Activated T-helper 1 cell treated with anti-CD3 and anti-CD28 coated beads, Interleukin-12 subunit alpha, Interleukin-12 subunit beta, Interleukin-2, Interleukin-4 antibody, amounts not matched to agents 30 ng/mL and 10 ng/mL and 1 ng/mL, durations not matched to agents 14 hours and 24 hours and 36 hours (primary cell): ENCODE measurements at regions of chr4 and their contacts with region 1.

Region 1: DNA sequence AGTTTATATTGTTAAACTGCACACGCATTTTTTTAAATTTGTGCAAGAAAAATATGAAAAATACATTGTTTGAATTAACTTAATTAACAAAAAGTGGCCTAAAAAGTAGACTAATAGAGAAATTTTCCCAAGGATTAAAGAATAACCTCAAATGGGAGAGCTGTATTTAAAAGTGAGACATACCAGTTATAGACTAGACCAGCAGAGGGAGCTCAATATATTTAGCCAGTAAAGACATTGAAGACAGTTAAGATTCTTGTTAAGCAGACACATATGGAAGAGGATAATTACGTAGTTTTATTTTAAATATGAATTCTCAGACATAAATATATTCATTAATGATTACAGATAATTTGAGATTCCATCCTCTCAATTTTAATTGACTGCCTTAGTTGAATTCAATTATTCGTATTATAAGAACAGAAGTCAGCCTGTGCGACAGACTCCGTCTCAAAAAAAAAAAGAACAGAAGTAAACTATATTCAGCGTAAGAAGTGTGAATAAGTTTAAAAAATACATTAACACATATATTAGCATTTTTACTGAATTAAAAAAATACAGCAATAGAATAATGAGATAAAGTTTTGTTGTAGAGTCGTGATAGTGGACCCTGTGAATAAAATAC is 64.8 kb downstream of the GLRA3 start:
- DNase-seq: no peak
- H3K4me3 Mint-ChIP-seq: no peak overlapping the region
- H3K27ac Mint-ChIP-seq: no peak overlapping the region
- H3K4me1 Mint-ChIP-seq: no peaks in the 10 kb centered on the region
- H3K27me3 Mint-ChIP-seq: no peaks in the 10 kb centered on the region

Region 2: GRCh38 chr4:174813292-174813691 is 49.1 kb after region 1 on chr4:
- intact Hi-C with region 1: no loop called
- DNase-seq: no peak
- H3K4me3 Mint-ChIP-seq: no peak overlapping the region
- H3K27ac Mint-ChIP-seq: no peak overlapping the region
- H3K4me1 Mint-ChIP-seq: no peaks in the 10 kb centered on the region
- H3K27me3 Mint-ChIP-seq: no peaks in the 10 kb centered on the region

Region 3: DNA sequence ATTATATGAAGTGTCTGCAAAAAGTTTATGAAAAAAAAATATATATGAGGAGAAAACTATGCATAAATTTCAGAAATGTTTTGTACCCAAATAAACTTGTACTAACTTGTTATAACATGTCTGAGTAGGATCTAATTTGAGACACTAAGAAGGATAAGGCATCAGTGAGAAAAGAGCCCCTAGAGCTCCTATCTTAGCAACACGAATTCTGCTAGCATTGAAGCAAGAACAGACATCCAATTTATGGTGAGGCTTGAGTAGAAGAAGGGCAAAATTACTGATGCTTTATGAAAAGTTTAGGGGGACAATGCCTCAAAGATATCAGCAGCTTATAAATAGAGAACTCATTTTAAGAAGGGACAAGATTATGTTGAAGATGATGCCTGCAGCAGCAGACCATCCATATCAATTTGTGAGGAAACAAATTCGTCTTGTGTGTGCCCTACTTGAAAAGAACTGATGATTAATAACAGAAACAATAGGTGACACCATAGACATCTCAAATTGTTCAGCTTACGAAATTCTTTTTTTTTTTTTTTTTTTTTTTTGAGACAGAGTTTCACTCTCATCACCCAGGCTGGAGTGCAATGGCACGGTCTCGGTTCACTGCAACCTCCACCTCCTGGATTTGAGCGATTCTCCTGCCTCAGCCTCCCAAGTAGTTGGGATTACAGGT is 118.2 kb after region 1 on chr4:
- intact Hi-C with region 1: no loop called
- DNase-seq: no peak
- H3K4me3 Mint-ChIP-seq: no peak overlapping the region
- H3K27ac Mint-ChIP-seq: no peak overlapping the region
- H3K4me1 Mint-ChIP-seq: no peaks in the 10 kb centered on the region
- H3K27me3 Mint-ChIP-seq: no peaks in the 10 kb centered on the region

Region 4: DNA sequence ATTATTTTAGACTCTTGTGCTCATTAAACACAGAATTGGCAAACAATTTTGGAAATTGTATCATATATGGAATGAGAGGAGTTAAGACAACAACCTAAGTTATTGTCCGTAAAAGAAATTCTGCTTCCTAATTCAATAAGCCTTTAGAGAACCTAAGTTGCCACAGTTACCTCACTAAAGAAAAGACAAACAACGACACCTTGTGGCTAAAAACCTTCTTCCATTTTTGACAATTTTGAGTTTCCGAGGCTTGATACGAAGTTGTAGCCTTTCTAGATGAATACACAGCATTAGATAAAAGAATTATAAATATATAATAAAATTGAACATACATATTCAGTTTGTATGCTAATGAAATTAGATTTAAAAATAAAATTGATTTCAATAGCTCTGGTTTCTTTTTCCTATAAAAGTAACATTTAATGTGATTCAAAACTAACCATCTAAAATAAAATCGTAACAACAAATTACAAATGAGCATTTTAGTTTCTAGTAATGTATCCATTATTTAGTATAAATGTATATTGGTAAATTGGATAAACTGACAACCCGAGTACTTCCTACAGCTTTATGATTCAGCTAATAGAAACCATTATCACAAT is 772.7 kb after region 1 on chr4:
- intact Hi-C with region 1: loop called (anchors 10 kb)
- DNase-seq: no peak
- H3K4me3 Mint-ChIP-seq: no peak overlapping the region
- H3K27ac Mint-ChIP-seq: no peak overlapping the region
- H3K4me1 Mint-ChIP-seq: no peaks in the 10 kb centered on the region
- H3K27me3 Mint-ChIP-seq: no peaks in the 10 kb centered on the region